Posterior vena cava (tissue), 2 donors: ENCODE measurements at regions of chr14 and their contacts with region 1.

Region 1: DNA sequence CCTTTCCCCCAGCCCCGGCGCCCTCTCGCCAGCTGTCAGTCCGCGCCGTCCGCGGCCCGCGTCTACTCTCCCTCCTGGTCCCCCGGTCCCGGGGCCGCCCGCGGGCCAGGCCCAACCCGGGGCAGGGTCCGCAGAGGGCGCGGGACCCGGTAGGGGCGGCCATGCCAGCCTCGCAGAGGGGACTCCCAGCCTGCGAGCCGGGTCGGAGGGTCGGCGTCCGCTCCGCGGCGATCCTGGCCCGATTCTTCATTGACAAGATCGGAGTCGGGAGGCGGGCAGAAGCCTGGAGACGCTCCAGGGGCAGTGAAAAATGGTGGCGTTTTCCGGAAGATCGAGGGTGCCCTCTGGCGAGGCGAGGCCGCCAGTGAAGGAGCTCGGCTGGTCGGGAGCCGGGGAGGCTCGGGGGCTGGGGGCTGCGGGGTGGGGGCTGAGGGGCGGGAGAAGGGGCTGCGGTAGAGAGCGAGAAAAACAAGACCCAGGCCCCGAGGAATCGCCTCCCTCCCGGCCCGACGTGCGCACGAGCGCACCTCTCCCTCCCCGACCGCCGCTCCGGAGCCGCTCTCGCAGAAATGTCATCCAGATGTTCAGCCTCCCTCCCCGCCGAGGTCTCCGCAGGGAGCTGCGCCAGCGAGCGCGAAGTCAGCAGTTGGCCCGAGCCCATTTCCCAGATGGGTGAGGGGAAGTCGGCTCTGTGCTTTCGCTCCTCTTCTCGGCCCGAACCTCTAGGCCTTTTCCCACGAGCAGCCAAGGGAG is 647 bp upstream of the TGFB3 start:
- DNase-seq: peak; percentile 96

Region 2: GRCh38 chr14:74852927-74853514 is 1129.4 kb before region 1 on chr14:
- intact Hi-C with region 1: no loop called
- DNase-seq: no peak

Region 3: DNA sequence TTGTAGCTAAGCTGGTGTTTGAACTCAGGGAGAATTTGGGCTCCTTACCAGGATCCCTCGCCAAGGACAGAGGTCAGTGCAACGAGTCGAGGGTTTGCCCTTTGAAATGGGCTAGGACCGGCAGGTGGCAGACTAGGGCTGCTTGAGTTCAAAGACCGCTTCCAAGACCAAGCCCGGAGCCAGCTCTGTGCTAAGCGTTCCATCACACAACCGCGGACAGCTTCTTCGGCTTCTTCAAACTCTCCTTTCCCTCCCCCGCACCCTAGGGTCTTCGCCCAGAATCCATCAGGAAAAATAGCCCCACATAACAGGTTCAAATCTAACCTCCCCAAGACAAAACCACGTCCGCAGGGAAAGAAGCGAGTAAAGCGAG is 404.7 kb before region 1 on chr14:
- intact Hi-C with region 1: loop called in 1 of 2 experiments (anchors 5 kb)
- DNase-seq: peak; percentile 96

Region 4: DNA sequence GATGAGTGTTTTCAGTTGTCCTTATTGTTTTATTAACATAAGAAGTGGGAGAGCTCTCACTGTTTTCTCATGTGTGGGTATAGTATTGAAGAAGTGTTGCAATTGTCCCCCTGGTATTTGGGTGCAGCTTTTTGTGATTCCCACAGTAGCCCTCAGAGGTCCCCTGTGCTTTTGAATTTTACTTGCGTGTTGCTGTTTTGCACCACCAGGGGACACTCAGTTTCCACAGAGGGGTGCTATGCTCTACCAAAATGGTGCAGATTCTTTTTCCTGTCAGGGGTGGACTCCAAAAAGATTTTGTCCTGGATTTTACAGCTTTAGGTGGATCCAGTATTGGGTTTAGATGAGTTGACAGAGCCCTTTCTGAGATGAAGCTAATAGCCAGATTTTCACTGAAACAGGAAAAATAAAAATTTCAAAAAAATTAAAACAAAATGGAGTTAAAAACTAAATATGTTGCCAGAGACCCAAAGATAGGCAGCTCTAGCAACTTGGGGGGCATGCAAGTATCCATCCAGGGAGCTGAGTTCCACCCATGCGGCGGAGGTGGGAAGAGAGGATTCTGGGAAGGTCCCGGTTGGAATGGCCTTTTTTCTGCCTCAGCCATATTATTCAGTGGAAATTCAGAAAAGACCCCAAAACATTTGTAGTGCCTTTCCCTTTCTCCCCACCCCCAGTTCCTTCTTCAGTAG is 271.2 kb before region 1 on chr14:
- intact Hi-C with region 1: loop called (anchors 2 to 5 kb)
- DNase-seq: no peak

Region 5: DNA sequence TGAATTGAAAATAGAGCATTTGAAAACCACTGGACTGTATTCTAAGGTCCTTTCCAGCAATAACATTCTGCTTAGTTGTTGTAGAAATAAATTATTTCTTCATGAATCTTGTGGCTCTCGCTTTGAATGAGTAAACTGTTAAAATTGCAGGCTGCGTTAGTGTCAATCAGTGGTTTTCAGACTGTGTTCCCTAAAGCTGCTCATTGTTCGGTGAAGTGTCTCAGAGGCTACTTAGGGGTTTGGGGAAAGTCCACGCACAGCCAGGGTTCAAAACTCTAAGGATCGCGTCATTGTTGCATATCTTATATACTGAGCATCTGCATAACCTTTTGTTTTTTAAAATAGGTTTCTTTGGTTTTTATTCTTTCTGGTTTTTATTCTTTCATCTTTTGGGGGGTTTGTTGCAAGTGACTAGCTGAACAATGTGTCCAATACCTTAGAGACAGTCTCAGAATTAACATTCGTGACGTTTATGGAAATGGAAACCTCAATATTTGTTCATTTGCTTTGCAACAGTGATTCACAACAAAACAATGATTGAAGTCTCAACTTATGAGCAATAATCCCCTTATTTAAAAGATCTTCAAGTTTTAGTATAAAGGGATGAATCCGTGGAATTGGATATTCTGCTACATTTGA is 213.3 kb before region 1 on chr14:
- intact Hi-C with region 1: no loop called
- DNase-seq: no peak

Region 6: GRCh38 chr14:75794615-75795038 is 187.8 kb before region 1 on chr14:
- intact Hi-C with region 1: loop called in 1 of 2 experiments (anchors 2 kb)
- DNase-seq: no peak

Region 7: DNA sequence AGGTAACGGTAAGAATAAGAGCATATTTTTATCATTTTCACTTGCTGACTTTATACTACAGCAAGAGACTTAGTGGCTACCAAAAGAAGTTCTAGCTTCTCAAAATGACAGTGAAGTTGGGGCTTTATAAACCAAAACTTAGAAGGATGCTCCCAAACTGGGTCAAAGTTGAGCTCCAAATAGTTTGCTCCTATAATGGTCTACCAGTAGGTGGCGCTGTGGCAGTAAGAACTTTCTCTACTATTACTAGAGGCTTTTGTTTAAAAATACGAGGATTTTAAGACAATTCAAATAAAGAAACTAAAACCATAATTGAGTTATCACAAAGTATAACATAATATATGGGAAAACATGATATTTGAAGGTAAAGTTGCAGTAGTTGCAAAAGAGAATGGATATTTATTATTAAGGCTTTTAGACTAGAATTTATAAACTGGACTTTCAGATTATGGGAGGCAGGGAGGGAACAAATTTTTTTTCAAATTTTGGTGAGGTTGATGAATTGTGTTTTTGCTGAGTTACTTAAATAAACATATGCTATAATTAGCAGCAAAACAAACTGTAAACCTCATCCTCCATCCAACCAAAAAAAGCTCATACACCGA is 75.7 kb before region 1 on chr14:
- intact Hi-C with region 1: loop called in 1 of 2 experiments (anchors 10 kb)
- DNase-seq: no peak